ENCODE measurements at regions of chr11 and their contacts with region 1.

Region 1: DNA sequence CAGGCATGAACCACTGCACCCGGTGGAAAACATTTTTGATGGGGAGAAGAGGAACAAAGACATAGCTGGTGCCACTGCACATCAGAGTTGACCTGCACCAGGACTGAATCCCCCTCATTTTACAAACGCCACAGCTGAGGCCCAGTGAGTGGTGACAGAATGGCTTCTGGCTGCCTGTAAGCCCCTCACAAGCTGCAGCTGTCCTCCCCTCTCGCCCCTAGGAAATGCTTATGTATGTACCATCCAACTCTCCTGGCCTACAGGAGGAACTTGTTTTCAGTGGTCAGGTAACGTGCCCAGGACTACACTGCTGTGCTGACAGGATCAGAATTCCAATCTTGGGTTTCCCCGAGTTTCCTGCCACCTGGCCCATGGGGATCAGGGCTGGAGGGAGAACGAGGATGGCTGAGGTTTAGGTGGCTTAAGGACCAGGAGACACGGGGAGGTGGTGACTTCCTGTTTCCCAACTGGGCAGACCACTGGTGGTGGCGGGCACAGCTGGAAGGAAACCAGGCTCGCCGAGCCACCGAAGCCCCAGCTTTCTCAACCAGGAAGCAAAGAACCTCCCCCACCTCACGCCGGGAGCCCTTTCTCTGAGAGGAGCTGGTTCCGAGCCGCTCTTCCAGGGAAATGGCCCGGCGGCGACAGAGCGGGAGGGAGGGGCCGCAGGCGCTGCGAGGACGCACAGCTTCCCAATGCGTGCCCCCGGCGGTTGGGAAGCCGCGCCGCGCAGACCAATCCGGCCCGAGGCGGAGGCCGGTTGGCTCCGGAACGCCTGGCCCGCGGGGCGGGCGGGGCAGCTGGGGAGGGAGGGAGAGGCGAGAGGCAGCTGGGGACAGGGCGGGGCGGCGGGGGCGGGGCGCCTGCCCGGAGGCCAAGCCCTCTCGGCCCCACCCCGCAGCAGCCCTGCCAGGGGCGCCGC is 1.0 kb upstream of the LRFN4 start:
- DNase-seq: peak; percentile 97
- ATAC-seq: peak; percentile 74
- H3K4me3 Mint-ChIP-seq: peak overlapping the region; percentile 87
- H3K27ac Mint-ChIP-seq: peak overlapping the region; percentile 99
- H3K4me1 Mint-ChIP-seq: peaks cover 17% of the 10 kb centered on the region
- H3K27me3 Mint-ChIP-seq: no peaks in the 10 kb centered on the region
- CTCF ChIP-seq: no peak

Region 2: DNA sequence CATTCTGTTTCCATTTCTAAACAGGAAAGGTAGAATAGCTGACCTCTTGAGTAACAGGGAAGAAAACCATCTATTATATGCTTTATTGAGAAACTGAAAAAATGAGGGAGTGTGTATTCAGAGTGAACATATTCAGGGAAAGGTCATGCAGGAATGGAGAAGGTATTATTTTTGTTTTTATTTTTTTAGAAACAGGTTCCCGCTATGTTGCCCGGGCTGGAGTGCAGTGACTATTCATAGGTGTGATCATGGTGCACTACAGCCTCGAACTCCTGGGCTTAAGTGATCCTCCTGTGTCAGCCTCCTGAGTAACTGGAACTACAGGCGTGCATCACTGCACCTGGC is 21.4 kb before region 1 on chr11:
- CTCF ChIA-PET with region 1: interaction called, 10 read pairs
- POLR2A ChIA-PET with region 1: no interaction called
- DNase-seq: no peak
- ATAC-seq: no peak
- H3K4me3 Mint-ChIP-seq: no peak overlapping the region
- H3K27ac Mint-ChIP-seq: no peak overlapping the region; the same call in 1 of the 2 replicates
- H3K4me1 Mint-ChIP-seq: peaks cover 2% of the 10 kb centered on the region
- H3K27me3 Mint-ChIP-seq: no peaks in the 10 kb centered on the region
- CTCF ChIP-seq: no peak; the same call in none of the 2 replicates

Region 3: GRCh38 chr11:66842896-66843775 is 12.7 kb before region 1 on chr11 and contains the start of gene RCE1:
- CTCF ChIA-PET with region 1: interaction called, 30 read pairs
- POLR2A ChIA-PET with region 1: interaction called, 17 read pairs
- DNase-seq: peak; percentile 86
- ATAC-seq: peak; percentile 78
- H3K4me3 Mint-ChIP-seq: peak within 1 kb of the TSS; percentile 82
- H3K27ac Mint-ChIP-seq: peak within 1 kb of the TSS; percentile 87
- H3K4me1 Mint-ChIP-seq: peaks cover 20% of the 10 kb centered on the region
- H3K27me3 Mint-ChIP-seq: no peaks in the 10 kb centered on the region
- CTCF ChIP-seq: no peak
- total RNA-seq, gene RCE1: 34.5 to 36.9 TPM (median 34.6 TPM) in 3 replicates

Region 4: GRCh38 chr11:66958232-66958955 is 102.6 kb after region 1 on chr11 and contains the start of gene PC:
- CTCF ChIA-PET with region 1: interaction called, 14 read pairs
- POLR2A ChIA-PET with region 1: interaction called, 7 read pairs
- DNase-seq: peak; percentile 100
- ATAC-seq: peak; percentile 96
- H3K4me3 Mint-ChIP-seq: peak within 1 kb of the TSS; percentile 87
- H3K27ac Mint-ChIP-seq: peak within 1 kb of the TSS; percentile 99
- H3K4me1 Mint-ChIP-seq: peaks cover 26% of the 10 kb centered on the region
- H3K27me3 Mint-ChIP-seq: peaks cover 17% of the 10 kb centered on the region
- CTCF ChIP-seq: no peak
- total RNA-seq, gene PC: 22.1 to 27.2 TPM (median 25.6 TPM) in 3 replicates